HCT116 (cell line): ENCODE measurements at regions of chr2 and their contacts with region 1.

Region 1: GRCh38 chr2:119174216-119175037 is 15.9 kb upstream of the C1QL2 start:
- DNase-seq: peak; percentile 41
- ATAC-seq: peak; percentile 96
- H3K4me3 ChIP-seq: no peak overlapping the region
- H3K27ac ChIP-seq: no peak overlapping the region
- H3K4me1 ChIP-seq: peaks cover 3 to 4% of the 10 kb centered on the region in 2 experiments; a peak in 2 of 4 replicates
- H3K27me3 ChIP-seq: peaks cover 6% of the 10 kb centered on the region; the same call in 1 of the 2 replicates
- CTCF ChIP-seq: peak; percentile 83 to 98 (median 91)
- POLR2A ChIP-seq: no peak
- RAD21 ChIP-seq: peak; percentile 78

Region 2: GRCh38 chr2:118882709-118883210 is 291.7 kb before region 1 on chr2:
- CTCF ChIA-PET with region 1: interaction called, 16 read pairs
- POLR2A ChIA-PET with region 1: no interaction called
- RAD21 ChIA-PET with region 1: no interaction called
- intact Hi-C with region 1: loop called (anchors 1 kb)
- DNase-seq: peak; percentile 57
- ATAC-seq: peak; percentile 78
- H3K4me3 ChIP-seq: peak overlapping the region; percentile 29 to 49
- H3K27ac ChIP-seq: no peak overlapping the region
- H3K4me1 ChIP-seq: peaks cover 0 to 4% of the 10 kb centered on the region in 2 experiments; a peak in 2 of 4 replicates
- H3K27me3 ChIP-seq: peaks cover 12% of the 10 kb centered on the region; the same call in 1 of the 2 replicates
- CTCF ChIP-seq: peak; percentile 84 to 99 (median 97)
- POLR2A ChIP-seq: no peak
- RAD21 ChIP-seq: peak; percentile 91

Region 3: DNA sequence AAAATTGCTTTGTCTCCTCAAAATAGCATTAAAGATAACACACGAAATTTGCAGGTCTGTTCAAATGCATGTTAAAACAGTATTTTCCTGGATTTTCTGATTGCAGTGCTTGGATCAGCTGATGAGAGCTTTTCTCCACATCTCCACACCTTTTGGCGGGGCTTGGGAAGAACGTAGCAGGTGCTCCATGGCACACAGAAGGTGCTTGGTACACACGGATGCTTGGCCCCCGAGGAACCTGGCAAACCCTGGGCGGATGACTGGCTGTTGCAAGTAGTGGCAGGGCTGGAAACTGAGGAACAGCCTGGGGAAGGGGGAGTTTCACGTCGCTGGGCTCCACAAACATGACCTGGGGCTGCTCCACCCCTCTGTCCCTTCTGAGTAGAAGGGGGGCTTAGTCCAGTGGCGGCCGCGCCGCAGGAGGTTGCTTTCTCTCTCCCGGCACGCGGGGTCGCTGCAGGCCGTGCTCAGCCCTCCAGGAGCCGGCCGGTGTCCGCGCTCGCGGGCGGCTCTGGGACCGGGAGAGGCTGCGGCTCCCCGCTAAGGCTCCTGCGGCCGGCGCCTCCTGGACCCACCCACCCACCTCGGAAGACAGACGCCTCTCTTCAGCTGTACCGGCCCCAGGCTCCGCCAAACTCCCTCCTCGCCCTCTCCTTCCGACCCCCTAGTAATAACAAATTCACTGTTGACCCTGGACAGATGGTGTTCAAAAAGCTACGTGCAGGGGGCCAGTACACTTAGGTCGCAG is 163.1 kb before region 1 on chr2:
- CTCF ChIA-PET with region 1: no interaction called
- POLR2A ChIA-PET with region 1: no interaction called
- RAD21 ChIA-PET with region 1: no interaction called
- intact Hi-C with region 1: loop called (anchors 1 kb)
- DNase-seq: peak; percentile 16
- ATAC-seq: peak; percentile 95
- H3K4me3 ChIP-seq: peak overlapping the region in 1 of 2 experiments; percentile 10; a peak in 1 of 4 replicates
- H3K27ac ChIP-seq: no peak overlapping the region
- H3K4me1 ChIP-seq: no peaks in the 10 kb centered on the region; a peak in 1 of 4 replicates
- H3K27me3 ChIP-seq: peaks cover 18% of the 10 kb centered on the region; the same call in 1 of the 2 replicates
- CTCF ChIP-seq: peak; percentile 59 to 74 (median 64)
- POLR2A ChIP-seq: no peak
- RAD21 ChIP-seq: peak; percentile 83

Region 4: DNA sequence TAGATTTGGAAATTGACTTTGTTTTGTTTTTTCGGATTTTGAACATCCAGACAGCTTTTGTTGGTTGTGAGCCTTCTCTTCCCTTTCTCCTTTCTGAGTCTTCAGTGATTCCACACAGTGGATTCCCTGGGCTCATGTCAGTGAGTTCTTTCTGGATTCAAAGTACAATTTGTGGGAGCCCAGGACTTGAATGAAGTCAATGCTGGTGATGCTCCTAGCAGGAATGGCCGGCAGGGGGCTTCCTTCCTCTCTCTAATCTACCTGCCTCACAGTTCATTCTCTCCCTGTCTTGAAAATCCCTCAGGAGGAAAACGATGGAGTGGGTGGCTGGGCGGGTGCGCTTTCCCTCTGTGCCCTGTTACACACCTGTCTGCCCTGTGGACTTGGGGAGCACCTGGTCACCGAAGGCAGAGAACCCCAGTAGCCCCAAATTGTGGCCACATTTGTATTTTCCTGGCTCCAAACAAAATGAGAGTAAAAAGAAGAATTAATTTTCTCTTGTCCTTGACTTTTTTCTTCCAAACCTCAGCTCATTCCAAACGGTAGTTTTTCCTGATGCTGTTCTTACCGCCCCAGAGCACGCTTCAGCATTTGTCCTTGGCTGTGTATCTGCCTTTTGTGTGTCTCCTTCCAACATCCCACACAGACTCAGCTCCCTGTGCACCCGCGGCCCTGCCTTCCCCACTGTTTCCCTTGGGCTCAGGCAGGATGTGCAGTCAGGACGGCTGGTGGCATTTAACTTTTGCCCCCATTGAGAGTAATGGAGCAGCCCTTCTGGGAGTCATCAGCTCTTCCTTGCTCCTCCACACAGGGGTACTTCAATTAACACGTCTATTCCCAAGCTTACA is 145.9 kb before region 1 on chr2:
- CTCF ChIA-PET with region 1: no interaction called
- POLR2A ChIA-PET with region 1: no interaction called
- RAD21 ChIA-PET with region 1: no interaction called
- intact Hi-C with region 1: loop called (anchors 1 kb)
- DNase-seq: peak; percentile 48
- ATAC-seq: peak; percentile 90
- H3K4me3 ChIP-seq: no peak overlapping the region
- H3K27ac ChIP-seq: no peak overlapping the region
- H3K4me1 ChIP-seq: no peaks in the 10 kb centered on the region
- H3K27me3 ChIP-seq: peaks cover 9% of the 10 kb centered on the region; the same call in 1 of the 2 replicates
- CTCF ChIP-seq: peak; percentile 63 to 78 (median 69); a peak in 5 of 6 replicates
- POLR2A ChIP-seq: no peak
- RAD21 ChIP-seq: peak; percentile 76

Region 5: GRCh38 chr2:119106301-119106897 is 68.0 kb before region 1 on chr2:
- CTCF ChIA-PET with region 1: no interaction called
- POLR2A ChIA-PET with region 1: no interaction called
- RAD21 ChIA-PET with region 1: no interaction called
- intact Hi-C with region 1: loop called (anchors 5 kb)
- DNase-seq: no peak
- ATAC-seq: no peak
- H3K4me3 ChIP-seq: no peak overlapping the region
- H3K27ac ChIP-seq: no peak overlapping the region
- H3K4me1 ChIP-seq: peaks cover 0 to 6% of the 10 kb centered on the region in 2 experiments; a peak in 2 of 4 replicates
- H3K27me3 ChIP-seq: no peaks in the 10 kb centered on the region
- CTCF ChIP-seq: no peak
- POLR2A ChIP-seq: no peak
- RAD21 ChIP-seq: no peak